Heart left ventricle (tissue), 16 donors: ENCODE measurements at regions of chr7 and their contacts with region 1.

Region 1: GRCh38 chr7:130440527-130441365 is at the start of gene CEP41:
- DNase-seq: peak; percentile 97 to 99 (median 99)
- ATAC-seq: peak; percentile 98 to 100 (median 100)
- H3K4me3 ChIP-seq: peak within 1 kb of the TSS; percentile 21 to 89 (median 79)
- H3K27ac ChIP-seq: peak within 1 kb of the TSS; percentile 33 to 95 (median 87)
- H3K4me1 ChIP-seq: peaks cover 0 to 18% (median 9%) of the 10 kb centered on the region in 12 donors
- H3K27me3 ChIP-seq: no peaks in the 10 kb centered on the region
- CTCF ChIP-seq: no peak
- POLR2A ChIP-seq: peak in 1 of 2 donors; percentile 22
- total RNA-seq, gene CEP41: 1.9 to 11.4 (median 4.1) TPM

Region 2: DNA sequence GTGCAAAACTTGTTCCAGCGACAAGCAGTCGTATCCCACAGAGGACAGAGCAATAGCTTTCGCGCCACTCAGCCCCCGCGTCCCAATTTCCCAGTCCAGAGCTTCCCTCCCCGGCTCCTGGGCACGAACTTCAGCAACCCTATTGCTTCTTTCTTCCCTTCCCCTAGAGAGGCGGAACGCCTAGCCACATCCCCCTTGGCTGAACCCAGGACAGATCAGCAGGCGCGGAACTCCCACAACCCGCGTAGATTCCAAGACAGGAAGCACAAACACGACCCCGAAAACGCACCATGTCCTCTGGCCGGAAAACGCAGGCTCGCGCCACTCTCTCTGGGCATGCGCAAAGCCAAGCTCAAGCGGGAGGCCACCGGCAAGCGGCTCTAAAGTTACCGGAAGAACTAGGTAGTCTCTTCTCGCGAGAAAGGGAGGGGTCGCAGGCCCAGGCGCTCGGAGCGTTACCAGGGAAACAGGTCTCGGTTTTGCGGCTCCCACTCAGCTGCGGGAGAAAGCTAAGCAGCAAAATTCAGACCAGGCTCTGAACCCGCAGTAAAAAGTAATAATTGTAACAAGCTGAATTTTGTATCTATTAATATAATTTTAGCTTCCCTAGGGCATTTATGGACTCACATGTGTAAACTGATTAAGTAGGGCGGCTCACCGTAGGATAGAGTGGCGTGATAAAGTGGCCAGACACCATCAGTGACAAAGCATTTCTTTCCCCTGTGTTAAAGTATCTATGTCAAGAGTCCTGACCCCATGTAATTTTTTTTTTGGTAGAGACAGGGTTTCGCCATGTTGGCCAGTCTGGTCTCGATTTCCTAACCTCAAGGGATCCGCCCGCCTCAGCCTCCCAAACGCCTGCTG is 235.4 kb before region 1 on chr7 and contains the start of gene TMEM209:
- intact Hi-C with region 1: loop called in 1 of 10 experiments (anchors 5 kb)
- DNase-seq: peak; percentile 95 to 98 (median 96)
- ATAC-seq: peak; percentile 98 to 99 (median 99)
- H3K4me3 ChIP-seq: peak within 1 kb of the TSS; percentile 65 to 94 (median 78)
- H3K27ac ChIP-seq: peak within 1 kb of the TSS; percentile 62 to 93 (median 90)
- H3K4me1 ChIP-seq: peaks cover 0 to 18% (median 5%) of the 10 kb centered on the region in 12 donors
- H3K27me3 ChIP-seq: no peaks in the 10 kb centered on the region
- CTCF ChIP-seq: peak in 1 of 12 donors; percentile 8
- POLR2A ChIP-seq: peak in 1 of 2 donors; percentile 69
- total RNA-seq, gene TMEM209: 7.3 to 15.0 (median 10.1) TPM

Region 3: DNA sequence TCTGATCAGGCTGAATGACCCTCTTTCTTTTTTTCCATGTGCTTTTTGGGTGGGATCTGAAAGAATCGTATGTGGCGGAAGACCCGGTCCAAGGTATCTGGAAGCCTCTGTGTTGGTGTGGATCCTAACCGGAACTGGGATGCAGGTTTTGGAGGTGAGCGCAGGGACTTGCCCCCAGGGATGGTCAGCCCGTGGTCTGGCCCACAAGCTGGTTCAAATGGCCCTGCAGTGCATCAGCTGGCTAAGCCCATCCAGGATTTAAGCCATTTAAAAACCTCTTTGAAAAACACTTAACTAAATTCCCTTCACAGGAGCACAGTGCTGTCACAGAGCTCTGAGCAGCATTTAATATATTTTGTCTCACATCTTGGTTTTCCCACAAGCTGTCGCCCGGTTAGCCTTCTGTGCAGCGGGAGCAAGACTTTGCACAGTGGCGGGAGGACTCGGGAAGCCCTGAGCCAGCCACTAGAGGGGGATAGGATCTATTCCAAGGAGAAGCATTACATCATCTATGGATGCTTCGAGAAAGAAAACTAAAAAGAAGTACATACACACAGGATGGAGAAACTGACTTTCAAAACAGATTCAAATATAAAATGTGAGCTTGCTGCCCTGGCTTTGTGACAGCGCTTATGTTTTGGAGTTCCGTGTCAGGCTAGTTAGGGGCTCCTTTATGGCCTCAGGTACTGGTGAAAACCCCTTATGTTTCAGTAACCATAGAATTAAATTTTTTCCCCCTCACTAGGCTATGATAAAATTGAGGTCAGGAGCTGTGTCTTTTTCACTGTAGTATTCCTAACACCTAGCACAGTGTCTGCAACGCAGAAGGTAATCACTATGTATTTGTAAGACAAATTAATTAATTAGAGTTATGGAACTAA is 162.7 kb before region 1 on chr7:
- intact Hi-C with region 1: loop called in 1 of 10 experiments (anchors 5 kb)
- DNase-seq: peak in 4 of 5 donors; percentile 47 to 57 (median 55)
- ATAC-seq: peak; percentile 37 to 88 (median 85)
- H3K4me3 ChIP-seq: no peak overlapping the region
- H3K27ac ChIP-seq: peak overlapping the region in 2 of 12 donors; percentile 12 to 16
- H3K4me1 ChIP-seq: peaks cover 0 to 15% (median 3%) of the 10 kb centered on the region in 12 donors
- H3K27me3 ChIP-seq: peaks cover 0 to 21% (median 0%) of the 10 kb centered on the region in 9 donors
- CTCF ChIP-seq: peak; percentile 42 to 82 (median 60)
- POLR2A ChIP-seq: no peak

Region 4: GRCh38 chr7:130566168-130566897 is 125.6 kb after region 1 on chr7:
- intact Hi-C with region 1: loop called in 1 of 10 experiments (anchors 2 kb)
- DNase-seq: peak; percentile 81 to 93 (median 91)
- ATAC-seq: peak; percentile 99 to 100 (median 100)
- H3K4me3 ChIP-seq: peak overlapping the region in 1 of 12 donors; percentile 7
- H3K27ac ChIP-seq: peak overlapping the region; percentile 71 to 87 (median 82)
- H3K4me1 ChIP-seq: peaks cover 0 to 19% (median 4%) of the 10 kb centered on the region in 12 donors
- H3K27me3 ChIP-seq: no peaks in the 10 kb centered on the region
- CTCF ChIP-seq: no peak
- POLR2A ChIP-seq: no peak